ENCODE measurements at regions of chrX and their contacts with region 1.

Region 1: GRCh38 chrX:55907968-55908607 is 190.5 kb downstream of the RRAGB start:
- DNase-seq: peak; percentile 71
- H3K4me3 Mint-ChIP-seq: peak overlapping the region; percentile 82
- H3K27ac Mint-ChIP-seq: peak overlapping the region; percentile 69
- H3K4me1 Mint-ChIP-seq: peaks cover 13% of the 10 kb centered on the region
- H3K27me3 Mint-ChIP-seq: no peaks in the 10 kb centered on the region

Region 2: GRCh38 chrX:55135171-55135570 is 772.9 kb before region 1 on chrX:
- CTCF ChIA-PET with region 1: no interaction called
- POLR2A ChIA-PET with region 1: no interaction called
- intact Hi-C with region 1: no loop called
- DNase-seq: peak; percentile 42
- H3K4me3 Mint-ChIP-seq: no peak overlapping the region
- H3K27ac Mint-ChIP-seq: no peak overlapping the region
- H3K4me1 Mint-ChIP-seq: no peaks in the 10 kb centered on the region
- H3K27me3 Mint-ChIP-seq: no peaks in the 10 kb centered on the region

Region 3: GRCh38 chrX:55717521-55718497 is 190.3 kb before region 1 on chrX and contains the start of gene RRAGB:
- CTCF ChIA-PET with region 1: interaction called, 14 read pairs
- POLR2A ChIA-PET with region 1: no interaction called
- intact Hi-C with region 1: loop called (anchors 1 kb)
- DNase-seq: peak; percentile 93
- H3K4me3 Mint-ChIP-seq: peak within 1 kb of the TSS; percentile 83
- H3K27ac Mint-ChIP-seq: peak within 1 kb of the TSS; percentile 87
- H3K4me1 Mint-ChIP-seq: peaks cover 35% of the 10 kb centered on the region
- H3K27me3 Mint-ChIP-seq: no peaks in the 10 kb centered on the region
- total RNA-seq, gene RRAGB: 4.9 to 5.3 TPM

Region 4: GRCh38 chrX:55919367-55920221 is 11.5 kb after region 1 on chrX:
- CTCF ChIA-PET with region 1: no interaction called
- POLR2A ChIA-PET with region 1: no interaction called
- intact Hi-C with region 1: no loop called
- DNase-seq: no peak
- H3K4me3 Mint-ChIP-seq: no peak overlapping the region
- H3K27ac Mint-ChIP-seq: no peak overlapping the region
- H3K4me1 Mint-ChIP-seq: no peaks in the 10 kb centered on the region
- H3K27me3 Mint-ChIP-seq: no peaks in the 10 kb centered on the region

Region 5: GRCh38 chrX:56232221-56233082 is 324.4 kb after region 1 on chrX and contains the start of gene KLF8:
- CTCF ChIA-PET with region 1: no interaction called
- POLR2A ChIA-PET with region 1: no interaction called
- intact Hi-C with region 1: loop called (anchors 2 kb)
- DNase-seq: peak; percentile 61
- H3K4me3 Mint-ChIP-seq: peak within 1 kb of the TSS; percentile 72
- H3K27ac Mint-ChIP-seq: no peak within 1 kb of the TSS
- H3K4me1 Mint-ChIP-seq: peaks cover 12% of the 10 kb centered on the region
- H3K27me3 Mint-ChIP-seq: no peaks in the 10 kb centered on the region
- total RNA-seq, gene KLF8: 3.2 to 4.4 TPM